HepG2 (cell line): ENCODE measurements at regions of chr17 and their contacts with region 1.

Region 1: DNA sequence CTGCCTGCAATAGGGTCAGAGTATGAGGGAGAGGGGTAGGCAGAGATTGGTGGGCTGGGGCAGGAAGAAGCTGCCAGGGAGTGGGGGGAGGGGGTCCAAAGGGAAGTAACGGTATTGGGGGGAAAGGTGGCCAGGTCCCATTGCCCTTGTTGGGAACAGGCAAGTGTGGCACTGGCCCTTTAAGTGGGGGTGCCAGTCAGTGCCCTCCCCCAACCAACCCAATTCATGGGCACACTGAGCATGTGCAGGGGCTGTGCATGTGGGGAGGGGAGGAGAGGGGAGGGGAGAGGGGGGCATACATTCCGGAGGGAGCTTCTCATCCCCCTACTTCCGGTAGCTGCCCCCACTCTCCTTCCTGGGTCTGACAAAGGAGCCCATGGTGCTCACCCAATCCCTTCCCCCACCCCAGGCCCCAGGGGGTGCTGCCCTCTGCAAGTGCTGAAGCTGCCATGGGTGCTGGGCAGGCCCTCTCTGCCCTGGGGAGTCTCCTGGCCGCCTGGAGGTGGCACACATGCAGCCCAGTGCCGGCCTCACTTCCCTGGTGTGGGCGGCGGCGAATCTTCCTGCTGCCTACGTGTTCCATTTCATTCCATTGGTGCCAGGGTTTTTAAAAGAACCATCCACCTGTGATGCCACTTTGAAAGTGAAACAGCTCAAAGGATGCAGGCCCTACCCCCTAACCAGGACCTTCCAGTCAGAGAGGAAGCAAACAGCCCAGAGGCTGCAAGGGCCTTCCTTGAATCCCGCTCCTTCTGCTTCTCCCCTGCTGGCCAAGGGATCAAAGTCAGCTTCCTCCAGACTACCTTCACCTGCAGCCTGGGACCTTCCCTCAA is 11.0 kb downstream of the HEXIM2 start:
- DNase-seq: peak; percentile 97
- ATAC-seq: peak; percentile 66
- H3K4me3 ChIP-seq: peak overlapping the region; percentile 53 to 74 (median 65)
- H3K27ac ChIP-seq: peak overlapping the region; percentile 97
- H3K4me1 ChIP-seq: peaks cover 70% of the 10 kb centered on the region
- H3K27me3 ChIP-seq: no peaks in the 10 kb centered on the region
- CTCF ChIP-seq: peak; percentile 51
- EP300 ChIP-seq: peak; percentile 47 to 74; a peak in 2 of 4 replicates
- POLR2A ChIP-seq: peak; percentile 75 to 80
- RAD21 ChIP-seq: peak; percentile 69

Region 2: DNA sequence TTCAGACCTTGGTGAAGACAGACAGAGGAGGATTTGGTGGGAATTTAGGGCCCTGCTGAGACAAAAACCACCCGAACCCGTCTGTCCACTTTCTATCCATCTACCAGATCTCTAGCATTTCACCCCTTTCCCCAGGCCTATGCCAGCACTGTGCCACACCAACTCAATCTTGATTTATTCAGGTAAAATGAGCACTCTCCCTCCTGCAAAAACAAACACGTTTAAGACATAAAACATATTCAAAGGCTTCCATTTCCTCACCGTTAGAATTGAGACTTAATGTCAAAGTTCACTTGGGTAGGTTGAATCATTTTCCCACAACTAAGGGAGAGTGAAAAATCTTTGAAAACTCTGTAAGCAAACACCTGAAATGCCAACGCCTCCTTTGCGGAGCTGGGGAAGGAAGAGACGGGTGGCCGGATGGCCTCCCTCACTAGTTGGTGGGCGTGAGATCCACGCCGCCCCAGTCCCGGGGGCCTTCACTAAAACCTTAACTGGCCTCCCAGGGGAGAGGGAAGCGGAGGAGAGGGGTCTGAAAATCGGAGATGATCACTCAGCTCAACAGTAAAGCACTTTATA is 122.1 kb before region 1 on chr17:
- CTCF ChIA-PET with region 1: no interaction called
- POLR2A ChIA-PET with region 1: no interaction called
- in situ Hi-C with region 1: no loop called
- intact Hi-C with region 1: no loop called
- DNase-seq: peak; percentile 60
- ATAC-seq: peak; percentile 36
- H3K4me3 ChIP-seq: peak overlapping the region; percentile 76 to 89 (median 78)
- H3K27ac ChIP-seq: peak overlapping the region; percentile 94
- H3K4me1 ChIP-seq: peaks cover 52% of the 10 kb centered on the region
- H3K27me3 ChIP-seq: no peaks in the 10 kb centered on the region; a peak in 1 of 5 replicates
- CTCF ChIP-seq: no peak
- EP300 ChIP-seq: no peak
- POLR2A ChIP-seq: no peak; a peak in 1 of 4 replicates
- RAD21 ChIP-seq: no peak

Region 3: DNA sequence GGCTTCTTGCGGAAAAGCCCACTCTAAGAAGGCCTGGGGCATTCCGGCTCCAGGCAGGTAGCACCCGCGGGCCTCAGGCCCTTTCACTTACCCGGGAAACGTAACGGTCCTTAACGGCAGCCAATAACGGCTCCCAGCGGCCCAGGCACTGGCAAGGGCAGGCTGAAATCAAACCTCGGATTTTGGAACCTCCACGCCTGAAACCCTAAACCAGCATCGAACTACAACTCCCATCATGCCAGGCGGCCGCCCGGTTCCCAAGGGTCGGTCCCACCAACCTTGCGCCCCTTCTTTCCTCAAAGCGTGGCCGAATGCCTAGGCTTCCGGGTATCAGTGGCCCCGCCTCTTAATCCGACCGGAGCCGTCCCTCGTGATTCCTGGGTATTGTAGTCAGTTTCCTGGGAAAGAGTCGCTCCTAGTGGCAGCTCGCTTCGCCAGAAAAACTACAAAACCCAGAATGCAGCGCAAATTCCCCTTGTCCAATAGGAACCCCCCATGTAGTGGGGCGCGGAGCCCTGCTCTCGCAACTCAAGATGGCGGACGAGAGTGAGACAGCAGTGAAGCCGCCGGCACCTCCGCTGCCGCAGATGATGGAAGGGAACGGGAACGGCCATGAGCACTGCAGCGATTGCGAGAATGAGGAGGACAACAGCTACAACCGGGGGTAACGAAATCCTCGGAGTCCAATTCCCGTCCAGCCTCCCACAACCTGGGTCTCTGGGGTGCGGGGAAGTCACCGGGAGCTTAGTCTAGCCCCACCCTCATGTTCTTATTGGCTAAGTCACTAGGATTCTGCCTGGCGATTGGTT is 111.7 kb before region 1 on chr17 and contains the start of gene NMT1:
- CTCF ChIA-PET with region 1: no interaction called
- POLR2A ChIA-PET with region 1: interaction called, 10 read pairs
- in situ Hi-C with region 1: no loop called
- intact Hi-C with region 1: no loop called
- DNase-seq: peak; percentile 100
- ATAC-seq: peak; percentile 95
- H3K4me3 ChIP-seq: peak within 1 kb of the TSS; percentile 91 to 99 (median 97)
- H3K27ac ChIP-seq: peak within 1 kb of the TSS; percentile 94
- H3K4me1 ChIP-seq: peaks cover 48% of the 10 kb centered on the region
- H3K27me3 ChIP-seq: no peaks in the 10 kb centered on the region; a peak in 1 of 5 replicates
- CTCF ChIP-seq: peak; percentile 15; the same call in 1 of the 2 replicates
- EP300 ChIP-seq: peak in 1 of 2 experiments; percentile 40; a peak in 2 of 4 replicates
- POLR2A ChIP-seq: peak; percentile 91 to 96
- RAD21 ChIP-seq: no peak; the same call in none of the 2 replicates
- total RNA-seq, gene NMT1: 142 and 194 TPM in 2 replicates

Region 4: DNA sequence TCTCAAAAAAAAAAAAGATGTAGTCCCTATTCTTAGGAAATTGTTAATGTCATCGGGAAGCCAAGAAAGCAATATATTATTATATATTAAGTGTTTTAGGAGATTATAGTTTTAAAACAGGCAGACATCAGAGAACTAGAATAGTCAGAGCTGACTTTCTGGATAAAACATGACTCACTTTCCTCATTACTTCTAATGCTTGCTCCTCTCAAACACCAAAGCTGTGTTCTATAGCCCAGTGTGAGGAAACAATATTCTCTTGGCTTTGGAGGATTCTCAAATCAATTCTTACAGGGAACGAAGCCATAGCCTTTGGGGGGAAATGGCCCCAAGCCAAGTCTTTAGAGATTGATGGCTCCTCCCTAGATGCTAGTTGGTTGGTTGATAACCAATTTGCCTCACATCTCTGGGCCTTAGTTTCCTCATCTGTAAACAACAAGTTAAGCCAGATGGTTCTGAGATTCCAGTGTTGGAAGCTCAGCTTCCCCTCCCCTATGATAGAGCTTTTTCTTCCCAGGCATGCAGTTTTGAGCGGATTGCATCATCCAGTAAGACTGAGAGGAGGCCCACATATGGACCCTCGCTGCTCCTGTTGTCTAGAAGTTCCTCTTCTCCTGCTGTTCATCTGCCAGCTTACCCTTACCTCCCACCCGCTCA is 99.1 kb before region 1 on chr17:
- CTCF ChIA-PET with region 1: no interaction called
- POLR2A ChIA-PET with region 1: no interaction called
- in situ Hi-C with region 1: no loop called
- intact Hi-C with region 1: no loop called
- DNase-seq: no peak
- ATAC-seq: no peak
- H3K4me3 ChIP-seq: no peak overlapping the region
- H3K27ac ChIP-seq: no peak overlapping the region
- H3K4me1 ChIP-seq: peaks cover 8% of the 10 kb centered on the region; the same call in 1 of the 2 replicates
- H3K27me3 ChIP-seq: no peaks in the 10 kb centered on the region
- CTCF ChIP-seq: no peak
- EP300 ChIP-seq: no peak
- POLR2A ChIP-seq: no peak
- RAD21 ChIP-seq: no peak

Region 5: DNA sequence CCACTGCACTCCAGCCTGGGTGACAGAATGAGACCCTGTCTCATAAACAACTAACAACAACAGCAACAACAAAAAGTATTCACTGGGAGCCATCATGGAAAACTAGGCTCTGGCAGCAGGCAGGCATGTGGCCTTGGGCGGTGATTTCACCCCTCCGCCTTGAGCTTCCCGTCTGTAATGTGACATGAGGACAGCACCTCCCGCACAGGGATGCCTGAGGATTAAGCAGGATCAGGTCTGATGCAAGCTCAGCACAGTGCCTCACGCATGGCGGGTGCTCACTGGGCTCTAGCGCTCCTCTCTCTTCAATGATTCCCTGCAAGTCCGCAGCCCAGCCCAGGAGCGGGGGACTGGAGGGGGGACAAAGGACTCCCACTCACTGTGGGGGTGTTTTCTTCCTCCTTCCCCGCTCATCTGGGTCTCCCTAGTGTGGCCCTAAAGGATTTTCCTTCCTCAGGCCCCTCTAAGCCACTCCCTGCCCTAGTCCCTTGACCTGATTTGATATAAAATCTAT is 43.2 kb before region 1 on chr17:
- CTCF ChIA-PET with region 1: no interaction called
- POLR2A ChIA-PET with region 1: interaction called, 10 read pairs
- in situ Hi-C with region 1: no loop called
- intact Hi-C with region 1: no loop called
- DNase-seq: peak; percentile 89
- ATAC-seq: peak; percentile 48
- H3K4me3 ChIP-seq: peak overlapping the region in 1 of 3 experiments; percentile 41; a peak in 2 of 6 replicates
- H3K27ac ChIP-seq: peak overlapping the region; percentile 63
- H3K4me1 ChIP-seq: peaks cover 70% of the 10 kb centered on the region
- H3K27me3 ChIP-seq: no peaks in the 10 kb centered on the region
- CTCF ChIP-seq: no peak
- EP300 ChIP-seq: peak in 1 of 2 experiments; percentile 24; a peak in 1 of 4 replicates
- POLR2A ChIP-seq: peak in 1 of 2 experiments; percentile 43; a peak in 1 of 4 replicates
- RAD21 ChIP-seq: no peak

Region 6: DNA sequence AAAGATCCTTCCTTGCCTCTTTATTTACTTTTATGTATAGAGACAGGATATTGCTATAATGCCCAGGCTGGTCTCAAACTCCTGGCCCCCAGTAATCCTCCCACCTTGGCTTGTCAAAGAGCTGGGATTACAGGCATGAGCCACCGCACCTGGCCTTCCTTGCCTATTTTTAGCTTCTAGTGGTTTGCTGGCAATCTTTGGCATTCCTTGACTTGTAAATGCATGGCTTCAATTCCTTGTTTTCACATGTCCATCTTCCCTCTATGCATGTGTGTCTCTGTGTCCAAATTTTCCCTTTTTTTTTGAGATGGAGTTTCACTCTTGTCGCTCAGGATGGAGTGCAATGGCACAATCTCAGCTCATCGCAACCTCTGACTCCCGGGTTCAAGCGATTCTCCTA is 11.5 kb after region 1 on chr17:
- CTCF ChIA-PET with region 1: interaction called, 3 read pairs
- POLR2A ChIA-PET with region 1: interaction called, 70 read pairs
- in situ Hi-C with region 1: no loop called
- intact Hi-C with region 1: no loop called
- DNase-seq: no peak
- ATAC-seq: no peak
- H3K4me3 ChIP-seq: no peak overlapping the region
- H3K27ac ChIP-seq: no peak overlapping the region
- H3K4me1 ChIP-seq: peaks cover 34% of the 10 kb centered on the region
- H3K27me3 ChIP-seq: no peaks in the 10 kb centered on the region
- CTCF ChIP-seq: no peak
- EP300 ChIP-seq: no peak
- POLR2A ChIP-seq: no peak
- RAD21 ChIP-seq: no peak

Region 7: DNA sequence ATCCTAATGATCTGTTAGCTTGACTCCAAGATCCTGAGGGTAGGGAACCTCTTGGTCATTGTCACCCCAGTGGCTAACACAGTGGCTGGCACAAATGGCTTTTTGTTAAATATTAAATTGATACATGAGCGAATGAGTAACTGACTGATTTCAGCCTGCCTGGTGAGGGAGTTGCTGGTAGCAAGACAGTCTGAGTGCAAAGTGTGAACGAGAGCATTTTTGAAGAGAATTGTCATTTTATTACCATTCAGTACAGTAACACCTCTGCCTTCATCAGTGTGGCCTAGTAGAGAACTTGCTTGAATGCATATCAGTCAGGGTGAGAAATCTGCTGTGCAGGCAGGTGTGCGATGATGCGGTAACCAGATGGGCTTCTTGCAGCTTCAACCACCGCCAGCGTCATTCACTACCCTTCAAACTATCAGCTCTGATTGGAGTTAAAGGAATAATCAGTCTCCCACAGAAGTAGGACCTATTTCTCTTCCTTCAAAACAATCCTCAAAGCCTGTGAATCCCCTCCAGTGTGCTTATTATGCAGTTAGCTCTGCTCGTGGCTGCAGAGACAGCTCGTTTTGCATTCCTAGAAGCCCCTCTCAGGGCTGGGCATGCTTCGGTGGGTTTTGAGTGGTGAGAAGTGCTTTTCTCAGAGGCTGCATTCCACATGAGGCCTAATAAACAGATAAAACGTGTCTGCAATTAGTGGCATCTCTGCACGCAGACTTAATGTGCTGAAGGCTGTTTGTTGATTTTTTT is 18.0 kb after region 1 on chr17:
- CTCF ChIA-PET with region 1: no interaction called
- POLR2A ChIA-PET with region 1: interaction called, 70 read pairs
- in situ Hi-C with region 1: no loop called
- intact Hi-C with region 1: no loop called
- DNase-seq: no peak
- ATAC-seq: peak; percentile 29
- H3K4me3 ChIP-seq: 0 out of 6 replicates have a peak overlapping the region, but pooled peaks of 1 of the 3 experiments have one; percentile 11
- H3K27ac ChIP-seq: no peak overlapping the region
- H3K4me1 ChIP-seq: peaks cover 52% of the 10 kb centered on the region
- H3K27me3 ChIP-seq: no peaks in the 10 kb centered on the region
- CTCF ChIP-seq: no peak
- EP300 ChIP-seq: no peak
- POLR2A ChIP-seq: no peak
- RAD21 ChIP-seq: no peak

Region 8: DNA sequence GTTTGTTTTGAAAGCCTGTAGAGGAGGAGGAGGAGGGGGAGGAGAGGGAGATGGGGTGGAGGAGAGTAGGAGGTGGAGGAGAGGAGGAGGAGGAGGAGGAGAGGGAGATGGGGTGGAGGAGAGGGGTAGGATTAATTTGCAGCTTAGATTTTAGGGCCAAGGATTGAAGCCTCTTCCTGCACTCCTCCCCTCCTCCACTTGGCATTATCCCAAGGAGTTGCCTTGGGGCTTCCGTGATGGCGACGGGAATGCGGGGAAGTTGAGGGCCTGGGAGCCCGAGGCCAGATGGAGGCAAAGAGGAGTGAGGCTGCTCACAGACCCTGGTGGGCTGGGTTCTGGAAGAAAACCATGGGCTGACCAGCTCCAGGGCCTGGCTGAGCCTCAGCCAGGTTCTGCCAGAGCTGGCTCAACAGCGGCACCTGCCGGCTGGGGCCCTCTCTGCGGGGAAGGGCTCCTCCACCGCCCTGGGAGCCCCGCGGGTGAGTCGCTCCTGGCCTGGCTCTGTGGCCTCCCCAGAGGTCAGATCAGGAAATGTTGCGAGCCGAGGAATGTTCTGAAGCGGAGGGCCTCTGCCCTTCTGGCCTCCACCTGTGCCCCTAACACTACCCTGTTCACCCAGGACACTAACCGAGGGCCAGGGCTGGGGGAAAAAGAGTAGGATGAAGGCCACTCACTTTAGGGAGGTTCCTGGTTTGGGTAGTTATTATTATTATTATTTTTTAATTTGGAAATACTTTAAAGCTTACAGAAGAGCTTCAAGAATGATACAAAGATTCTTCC is 25.1 kb after region 1 on chr17:
- CTCF ChIA-PET with region 1: interaction called, 9 read pairs
- POLR2A ChIA-PET with region 1: interaction called, 84 read pairs
- in situ Hi-C with region 1: no loop called
- intact Hi-C with region 1: no loop called
- DNase-seq: peak; percentile 92
- ATAC-seq: peak; percentile 91
- H3K4me3 ChIP-seq: peak overlapping the region; percentile 33 to 63 (median 41); a peak in 5 of 6 replicates
- H3K27ac ChIP-seq: peak overlapping the region; percentile 39
- H3K4me1 ChIP-seq: peaks cover 71% of the 10 kb centered on the region
- H3K27me3 ChIP-seq: no peaks in the 10 kb centered on the region
- CTCF ChIP-seq: peak; percentile 100
- EP300 ChIP-seq: peak; percentile 7 to 69; a peak in 2 of 4 replicates
- POLR2A ChIP-seq: no peak
- RAD21 ChIP-seq: peak; percentile 100

Region 9: GRCh38 chr17:45228763-45229539 is 56.3 kb after region 1 on chr17:
- CTCF ChIA-PET with region 1: no interaction called
- POLR2A ChIA-PET with region 1: interaction called, 25 read pairs
- in situ Hi-C with region 1: no loop called
- intact Hi-C with region 1: no loop called
- DNase-seq: peak; percentile 56
- ATAC-seq: peak; percentile 3; the same call in 2 of the 3 replicates
- H3K4me3 ChIP-seq: peak overlapping the region; percentile 7 to 62 (median 19); a peak in 4 of 6 replicates
- H3K27ac ChIP-seq: no peak overlapping the region
- H3K4me1 ChIP-seq: peaks cover 71% of the 10 kb centered on the region
- H3K27me3 ChIP-seq: peaks cover 10 to 40% of the 10 kb centered on the region in 2 experiments; a peak in 4 of 5 replicates
- CTCF ChIP-seq: no peak
- EP300 ChIP-seq: no peak
- POLR2A ChIP-seq: no peak
- RAD21 ChIP-seq: no peak